ENCODE measurements at regions of chr1 and their contacts with region 1.

Region 1: GRCh38 chr1:6784560-6785317 is 515 bp upstream of the CAMTA1 start:
- DNase-seq: peak; percentile 99
- ATAC-seq: peak; percentile 88
- H3K4me3 Mint-ChIP-seq: peak overlapping the region; percentile 75
- H3K27ac Mint-ChIP-seq: peak overlapping the region; percentile 78
- H3K4me1 Mint-ChIP-seq: peaks cover 42% of the 10 kb centered on the region
- H3K27me3 Mint-ChIP-seq: no peaks in the 10 kb centered on the region

Region 2: GRCh38 chr1:6359216-6360116 is 425.3 kb before region 1 on chr1:
- CTCF ChIA-PET with region 1: no interaction called
- POLR2A ChIA-PET with region 1: no interaction called
- intact Hi-C with region 1: loop called in 1 of 2 experiments (anchors 1 kb)
- DNase-seq: peak; percentile 76
- ATAC-seq: peak; percentile 83
- H3K4me3 Mint-ChIP-seq: peak overlapping the region; percentile 57
- H3K27ac Mint-ChIP-seq: peak overlapping the region; percentile 86
- H3K4me1 Mint-ChIP-seq: peaks cover 55% of the 10 kb centered on the region
- H3K27me3 Mint-ChIP-seq: no peaks in the 10 kb centered on the region

Region 3: DNA sequence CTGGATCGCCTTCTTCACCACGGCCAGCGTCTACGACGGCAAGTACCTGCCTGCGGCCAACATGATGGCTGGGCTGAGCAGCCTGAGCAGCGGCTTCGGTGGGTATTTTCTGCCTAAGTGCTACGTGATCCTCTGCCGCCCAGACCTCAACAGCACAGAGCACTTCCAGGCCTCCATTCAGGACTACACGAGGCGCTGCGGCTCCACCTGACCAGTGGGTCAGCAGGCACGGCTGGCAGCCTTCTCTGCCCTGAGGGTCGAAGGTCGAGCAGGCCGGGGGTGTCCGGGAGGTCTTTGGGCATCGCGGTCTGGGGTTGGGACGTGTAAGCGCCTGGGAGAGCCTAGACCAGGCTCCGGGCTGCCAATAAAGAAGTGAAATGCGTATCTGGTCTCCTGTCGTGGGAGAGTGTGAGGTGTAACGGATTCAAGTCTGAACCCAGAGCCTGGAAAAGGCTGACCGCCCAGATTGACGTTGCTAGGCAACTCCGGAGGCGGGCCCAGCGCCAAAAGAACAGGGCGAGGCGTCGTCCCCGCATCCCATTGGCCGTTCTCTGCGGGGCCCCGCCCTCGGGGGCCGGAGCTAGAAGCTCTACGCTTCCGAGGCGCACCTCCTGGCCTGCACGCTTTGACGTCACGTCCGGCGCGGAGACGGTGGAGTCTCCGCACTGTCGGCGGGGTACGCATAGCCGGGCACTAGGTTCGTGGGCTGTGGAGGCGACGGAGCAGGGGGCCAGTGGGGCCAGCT is 205.2 kb before region 1 on chr1 and contains the start of gene ZBTB48:
- CTCF ChIA-PET with region 1: no interaction called
- POLR2A ChIA-PET with region 1: interaction called, 4 read pairs
- intact Hi-C with region 1: loop called in 1 of 2 experiments (anchors 1 kb)
- DNase-seq: peak; percentile 99
- ATAC-seq: peak; percentile 99
- H3K4me3 Mint-ChIP-seq: peak within 1 kb of the TSS; percentile 92
- H3K27ac Mint-ChIP-seq: peak within 1 kb of the TSS; percentile 89
- H3K4me1 Mint-ChIP-seq: peaks cover 30% of the 10 kb centered on the region
- H3K27me3 Mint-ChIP-seq: no peaks in the 10 kb centered on the region
- total RNA-seq, gene ZBTB48: 23.2 to 26.0 TPM

Region 4: GRCh38 chr1:6701437-6702153 is 83.1 kb before region 1 on chr1 and contains the start of gene DNAJC11:
- CTCF ChIA-PET with region 1: interaction called, 4 read pairs
- POLR2A ChIA-PET with region 1: interaction called, 3 read pairs
- intact Hi-C with region 1: loop called (anchors 1 to 5 kb)
- DNase-seq: peak; percentile 93
- ATAC-seq: peak; percentile 98
- H3K4me3 Mint-ChIP-seq: peak within 1 kb of the TSS; percentile 90
- H3K27ac Mint-ChIP-seq: peak within 1 kb of the TSS; percentile 92
- H3K4me1 Mint-ChIP-seq: peaks cover 28% of the 10 kb centered on the region
- H3K27me3 Mint-ChIP-seq: no peaks in the 10 kb centered on the region
- total RNA-seq, gene DNAJC11: 53.2 to 62.0 TPM

Region 5: DNA sequence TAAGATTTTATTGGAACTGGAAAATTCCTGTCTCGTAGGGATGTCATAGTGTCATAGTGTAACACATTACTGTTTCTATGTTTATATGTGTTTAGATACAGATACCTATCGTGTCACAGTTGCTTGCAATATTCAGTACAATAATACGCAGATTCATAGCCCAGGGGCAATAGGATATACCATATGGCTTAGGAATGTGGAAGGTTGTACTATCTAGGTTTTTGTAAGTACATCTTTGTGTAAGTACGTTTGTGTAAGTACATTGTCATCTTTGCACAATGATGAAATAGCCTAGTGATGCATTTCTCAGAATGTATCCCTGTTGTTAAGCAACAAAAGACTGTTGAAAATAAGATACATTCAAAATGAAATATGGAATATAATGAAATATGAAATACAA is 69.4 kb after region 1 on chr1:
- CTCF ChIA-PET with region 1: no interaction called
- POLR2A ChIA-PET with region 1: no interaction called
- intact Hi-C with region 1: no loop called
- DNase-seq: no peak
- ATAC-seq: no peak
- H3K4me3 Mint-ChIP-seq: no peak overlapping the region
- H3K27ac Mint-ChIP-seq: no peak overlapping the region
- H3K4me1 Mint-ChIP-seq: peaks cover 2% of the 10 kb centered on the region
- H3K27me3 Mint-ChIP-seq: no peaks in the 10 kb centered on the region

Region 6: DNA sequence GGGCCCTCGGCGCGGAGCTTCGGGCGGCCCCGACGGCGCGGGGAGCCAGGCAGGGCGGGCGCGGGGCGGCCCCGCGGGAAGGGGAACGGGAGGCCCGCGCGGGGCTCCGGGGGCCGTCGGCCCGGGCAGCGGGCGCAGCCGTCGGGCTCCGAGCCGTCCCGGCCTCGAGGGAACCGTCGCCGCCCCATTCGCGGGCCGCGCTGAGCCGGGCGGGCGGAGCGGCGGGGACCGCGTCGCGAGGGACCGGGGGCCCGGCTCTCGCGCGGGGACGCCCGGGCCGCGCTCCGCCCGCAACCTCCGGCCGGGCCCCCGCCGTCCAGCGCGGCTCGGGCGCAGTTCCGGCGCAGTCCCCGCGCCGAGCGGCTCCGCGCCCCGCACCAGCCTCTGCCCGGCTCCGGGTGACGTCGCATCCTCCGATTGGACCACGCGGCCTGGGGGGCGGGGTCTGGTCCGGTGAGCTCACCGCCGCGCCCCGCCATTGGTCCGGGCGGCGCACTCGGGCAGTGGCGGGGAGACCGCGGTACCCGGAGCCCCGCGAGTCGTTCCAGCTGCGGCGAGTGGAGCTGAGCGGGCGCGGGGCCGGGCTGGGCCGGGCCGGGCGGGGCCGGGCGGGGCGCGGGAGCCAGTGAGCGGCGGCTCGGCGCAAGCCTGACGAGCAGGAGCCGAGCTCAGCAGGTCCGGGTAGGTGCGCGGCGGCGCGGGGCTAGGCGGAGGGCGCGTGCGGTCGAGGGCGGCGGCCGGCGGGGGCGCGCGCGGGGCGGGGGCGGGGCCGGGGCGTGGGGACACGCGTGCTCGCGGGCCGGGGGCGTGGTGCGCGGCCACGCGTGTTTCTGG is 919.7 kb after region 1 on chr1:
- CTCF ChIA-PET with region 1: no interaction called
- POLR2A ChIA-PET with region 1: no interaction called
- intact Hi-C with region 1: loop called in 1 of 2 experiments (anchors 10 kb)
- DNase-seq: peak; percentile 95
- ATAC-seq: peak; percentile 98
- H3K4me3 Mint-ChIP-seq: peak overlapping the region; percentile 61
- H3K27ac Mint-ChIP-seq: no peak overlapping the region
- H3K4me1 Mint-ChIP-seq: peaks cover 18% of the 10 kb centered on the region
- H3K27me3 Mint-ChIP-seq: peaks cover 44% of the 10 kb centered on the region

Region 7: GRCh38 chr1:7961216-7962015 is 1176.7 kb after region 1 on chr1 and contains the start of gene PARK7:
- CTCF ChIA-PET with region 1: no interaction called
- POLR2A ChIA-PET with region 1: no interaction called
- intact Hi-C with region 1: loop called in 1 of 2 experiments (anchors 2 kb)
- DNase-seq: peak; percentile 100
- ATAC-seq: peak; percentile 98
- H3K4me3 Mint-ChIP-seq: peak within 1 kb of the TSS; percentile 100
- H3K27ac Mint-ChIP-seq: peak within 1 kb of the TSS; percentile 100
- H3K4me1 Mint-ChIP-seq: peaks cover 49% of the 10 kb centered on the region
- H3K27me3 Mint-ChIP-seq: no peaks in the 10 kb centered on the region
- total RNA-seq, gene PARK7: 294 to 390 TPM

Measured in activated CD4-positive, alpha-beta T cell treated with anti-CD3 and anti-CD28 coated beads for 36 hours (primary cell).